ENCODE measurements at regions of chr6 and their contacts with region 1.

Region 1: GRCh38 chr6:15691250-15691869 is 28.5 kb upstream of the DTNBP1 start:
- H3K4me3 ChIP-seq: peak overlapping the region; percentile 3
- H3K27ac ChIP-seq: no peak overlapping the region
- H3K4me1 ChIP-seq: no peaks in the 10 kb centered on the region
- CTCF ChIP-seq: peak; percentile 99

Region 2: GRCh38 chr6:15623276-15624116 is 67.9 kb before region 1 on chr6:
- CTCF ChIA-PET with region 1: no interaction called
- POLR2A ChIA-PET with region 1: no interaction called
- H3K4me3 ChIP-seq: no peak overlapping the region
- H3K27ac ChIP-seq: no peak overlapping the region
- H3K4me1 ChIP-seq: peaks cover 23% of the 10 kb centered on the region
- CTCF ChIP-seq: no peak

Region 3: GRCh38 chr6:15653581-15653980 is 37.8 kb before region 1 on chr6:
- CTCF ChIA-PET with region 1: no interaction called
- POLR2A ChIA-PET with region 1: no interaction called
- H3K4me3 ChIP-seq: no peak overlapping the region
- H3K27ac ChIP-seq: no peak overlapping the region
- H3K4me1 ChIP-seq: no peaks in the 10 kb centered on the region
- CTCF ChIP-seq: no peak

Region 4: GRCh38 chr6:15668918-15669317 is 22.4 kb before region 1 on chr6:
- CTCF ChIA-PET with region 1: no interaction called
- POLR2A ChIA-PET with region 1: no interaction called
- H3K4me3 ChIP-seq: no peak overlapping the region
- H3K27ac ChIP-seq: no peak overlapping the region
- H3K4me1 ChIP-seq: no peaks in the 10 kb centered on the region
- CTCF ChIP-seq: no peak

Region 5: DNA sequence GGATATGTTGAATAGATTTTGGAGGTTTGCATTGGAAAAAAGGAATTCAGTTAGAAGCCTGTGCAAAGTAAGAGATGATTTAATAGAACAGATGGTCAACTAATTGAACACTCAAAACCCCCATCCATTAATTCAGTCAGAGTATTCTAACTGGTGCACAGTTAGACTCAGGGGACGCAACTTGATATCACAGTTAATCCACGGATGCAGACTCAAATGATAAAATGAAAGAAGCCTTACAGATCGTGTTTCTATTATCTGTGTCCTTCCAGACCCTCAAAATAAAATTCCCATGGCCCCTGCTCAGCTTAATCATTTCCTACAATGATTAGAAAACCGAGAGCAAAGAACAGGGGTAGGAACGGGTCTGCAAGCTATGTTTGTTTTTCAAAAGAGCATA is 16.9 kb after region 1 on chr6:
- CTCF ChIA-PET with region 1: interaction called, 12 read pairs
- POLR2A ChIA-PET with region 1: no interaction called
- H3K4me3 ChIP-seq: no peak overlapping the region
- H3K27ac ChIP-seq: no peak overlapping the region
- H3K4me1 ChIP-seq: no peaks in the 10 kb centered on the region
- CTCF ChIP-seq: no peak

Region 6: GRCh38 chr6:15735567-15736265 is 44.4 kb after region 1 on chr6:
- CTCF ChIA-PET with region 1: interaction called, 23 read pairs
- POLR2A ChIA-PET with region 1: no interaction called
- H3K4me3 ChIP-seq: no peak overlapping the region
- H3K27ac ChIP-seq: peak overlapping the region; percentile 57
- H3K4me1 ChIP-seq: peaks cover 10% of the 10 kb centered on the region
- CTCF ChIP-seq: no peak

Region 7: GRCh38 chr6:16168858-16169257 is 477.5 kb after region 1 on chr6:
- CTCF ChIA-PET with region 1: interaction called, 28 read pairs
- POLR2A ChIA-PET with region 1: no interaction called
- H3K4me3 ChIP-seq: no peak overlapping the region
- H3K27ac ChIP-seq: no peak overlapping the region
- H3K4me1 ChIP-seq: peaks cover 6% of the 10 kb centered on the region; the same call in 1 of the 2 replicates
- CTCF ChIP-seq: no peak

Region 8: DNA sequence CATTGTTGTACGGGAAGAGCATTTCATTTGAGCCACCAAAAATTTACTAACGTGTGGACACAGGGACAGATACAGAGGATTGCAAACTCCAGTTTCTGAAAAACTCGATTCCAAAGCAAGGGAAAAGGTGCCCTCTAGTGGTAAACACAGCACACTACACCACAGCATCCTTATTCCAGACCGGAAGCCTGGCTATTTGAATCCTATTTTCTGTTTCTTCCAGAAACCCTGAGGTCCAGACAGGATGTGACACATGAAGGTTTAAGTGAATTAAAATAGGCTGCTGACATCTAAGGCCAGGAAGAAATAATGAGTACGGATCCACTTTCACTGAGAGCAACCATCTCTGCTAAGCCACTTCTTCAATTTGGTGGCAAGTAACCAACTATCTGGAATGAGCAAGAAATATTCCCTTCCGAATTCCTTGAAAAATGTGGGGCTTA is 515.3 kb after region 1 on chr6:
- CTCF ChIA-PET with region 1: interaction called, 64 read pairs
- POLR2A ChIA-PET with region 1: no interaction called
- H3K4me3 ChIP-seq: no peak overlapping the region
- H3K27ac ChIP-seq: peak overlapping the region; percentile 89; the same call in 1 of the 2 replicates
- H3K4me1 ChIP-seq: peaks cover 8% of the 10 kb centered on the region
- CTCF ChIP-seq: peak; percentile 70

Region 9: GRCh38 chr6:16257999-16258708 is 566.8 kb after region 1 on chr6:
- CTCF ChIA-PET with region 1: no interaction called
- POLR2A ChIA-PET with region 1: no interaction called
- H3K4me3 ChIP-seq: no peak overlapping the region
- H3K27ac ChIP-seq: no peak overlapping the region
- H3K4me1 ChIP-seq: 0 out of 2 replicates have a peak, but pooled peaks cover 2% of the 10 kb centered on the region
- CTCF ChIP-seq: no peak